WTC11 (cell line): ENCODE measurements at regions of chr2 and their contacts with region 1.

Region 1: DNA sequence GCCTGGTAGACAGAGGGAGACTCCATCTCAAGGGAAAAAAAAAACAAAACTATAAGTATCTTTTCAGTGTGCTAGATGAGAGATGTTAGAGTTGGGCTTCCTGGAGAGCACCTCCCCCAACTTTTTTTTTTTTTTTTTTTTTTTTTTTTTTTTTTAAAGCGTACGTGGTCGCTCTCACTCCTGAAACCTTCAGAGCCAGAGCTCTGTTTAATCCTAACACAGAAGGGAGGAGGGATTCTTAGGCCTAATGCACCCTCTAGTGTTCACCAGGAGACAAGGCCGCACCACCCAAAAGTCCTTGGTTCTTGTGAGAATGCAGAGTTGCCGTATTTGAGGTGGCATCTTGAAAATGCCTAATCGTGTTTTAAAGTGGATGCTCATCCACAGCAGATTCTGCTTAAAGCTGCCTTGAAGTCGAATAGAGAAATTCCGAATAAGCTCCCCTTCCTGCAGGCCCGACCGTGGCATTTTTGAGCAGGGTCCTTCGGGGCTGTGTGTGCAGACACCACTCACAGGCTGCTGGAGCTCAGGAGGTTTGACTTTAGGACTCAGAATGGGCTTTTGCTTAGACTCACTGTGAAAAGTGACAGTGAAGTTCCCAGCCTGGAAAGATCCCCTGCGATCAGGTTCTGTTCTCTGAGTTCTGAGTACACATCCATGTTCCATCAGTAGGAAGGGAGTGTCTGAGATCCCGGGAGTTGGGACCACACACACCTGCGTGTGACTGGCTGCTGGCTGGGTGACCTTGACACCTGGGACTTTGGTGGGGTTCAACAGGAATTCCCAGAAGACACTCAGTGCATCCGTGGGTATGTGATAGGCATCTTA is 252.6 kb downstream of the AGAP1 start:
- DNase-seq: peak; percentile 72
- ATAC-seq: peak; percentile 89
- H3K4me3 Mint-ChIP-seq: no peak overlapping the region
- H3K27ac Mint-ChIP-seq: no peak overlapping the region; the same call in 1 of the 2 replicates
- H3K4me1 Mint-ChIP-seq: peaks cover 27% of the 10 kb centered on the region
- H3K27me3 Mint-ChIP-seq: no peaks in the 10 kb centered on the region
- CTCF ChIP-seq: peak; percentile 67

Region 2: DNA sequence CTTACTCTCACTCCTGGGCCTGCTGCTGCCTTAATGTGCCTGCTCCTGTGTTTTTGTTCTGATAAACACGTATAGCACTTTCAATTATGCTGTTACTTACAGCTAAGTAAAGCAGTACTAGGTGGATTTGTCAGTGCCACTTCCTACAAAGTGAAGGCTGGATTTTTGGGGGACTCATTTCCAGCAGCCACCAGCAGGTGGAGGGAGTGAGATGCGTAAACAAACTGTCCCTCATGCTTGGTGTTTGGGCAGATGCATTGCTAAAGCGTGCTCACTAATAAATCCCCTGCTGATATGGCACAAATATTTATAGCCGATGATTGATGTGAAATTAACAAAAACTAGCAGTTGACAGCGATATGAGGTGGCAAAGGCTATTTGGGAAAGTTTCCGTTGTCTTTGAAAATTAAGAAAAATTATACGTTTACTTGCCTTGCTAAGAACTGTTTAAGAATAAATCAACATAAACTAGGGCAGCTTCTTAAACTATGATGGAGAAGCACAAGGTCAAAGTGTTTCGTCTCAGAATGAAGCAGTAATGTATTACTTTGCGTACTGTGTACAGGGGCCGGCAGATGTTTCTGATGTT is 151.0 kb before region 1 on chr2:
- CTCF ChIA-PET with region 1: interaction called, 129 read pairs
- POLR2A ChIA-PET with region 1: no interaction called
- DNase-seq: peak; percentile 79
- ATAC-seq: peak; percentile 53; the same call in 1 of the 2 replicates
- H3K4me3 Mint-ChIP-seq: no peak overlapping the region
- H3K27ac Mint-ChIP-seq: no peak overlapping the region
- H3K4me1 Mint-ChIP-seq: peaks cover 52% of the 10 kb centered on the region
- H3K27me3 Mint-ChIP-seq: no peaks in the 10 kb centered on the region
- CTCF ChIP-seq: peak; percentile 66

Region 3: DNA sequence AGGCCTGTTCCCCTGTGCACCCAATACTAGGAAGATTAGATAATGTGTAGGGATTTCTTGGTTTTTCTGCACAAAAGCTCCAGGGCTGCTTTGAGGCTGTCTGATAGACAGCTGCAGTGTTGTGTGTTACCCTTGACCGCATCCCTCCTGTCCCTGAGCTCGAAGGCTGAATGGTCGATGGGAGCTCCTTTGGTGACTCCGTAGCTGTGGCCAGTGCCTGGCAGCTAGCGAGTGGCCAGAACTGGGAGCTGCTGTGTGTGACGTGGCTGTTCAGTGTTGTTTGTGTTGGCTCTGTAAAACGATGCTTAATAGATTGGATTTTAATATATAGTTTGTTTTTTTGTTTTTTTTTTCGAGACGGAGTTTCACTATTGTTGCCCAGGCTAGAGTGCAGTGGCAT is 82.6 kb before region 1 on chr2:
- CTCF ChIA-PET with region 1: interaction called, 13 read pairs
- POLR2A ChIA-PET with region 1: no interaction called
- DNase-seq: no peak
- ATAC-seq: no peak
- H3K4me3 Mint-ChIP-seq: no peak overlapping the region
- H3K27ac Mint-ChIP-seq: 0 out of 2 replicates have a peak overlapping the region, but pooled peaks have one; percentile 17
- H3K4me1 Mint-ChIP-seq: peaks cover 84% of the 10 kb centered on the region
- H3K27me3 Mint-ChIP-seq: no peaks in the 10 kb centered on the region; the same call in 1 of the 2 replicates
- CTCF ChIP-seq: no peak

Region 4: GRCh38 chr2:235675678-235676535 is 70.6 kb before region 1 on chr2:
- CTCF ChIA-PET with region 1: interaction called, 21 read pairs
- POLR2A ChIA-PET with region 1: no interaction called
- DNase-seq: no peak
- ATAC-seq: no peak
- H3K4me3 Mint-ChIP-seq: no peak overlapping the region
- H3K27ac Mint-ChIP-seq: 0 out of 2 replicates have a peak overlapping the region, but pooled peaks have one; percentile 54
- H3K4me1 Mint-ChIP-seq: peaks cover 80% of the 10 kb centered on the region
- H3K27me3 Mint-ChIP-seq: peaks cover 14% of the 10 kb centered on the region
- CTCF ChIP-seq: no peak

Region 5: DNA sequence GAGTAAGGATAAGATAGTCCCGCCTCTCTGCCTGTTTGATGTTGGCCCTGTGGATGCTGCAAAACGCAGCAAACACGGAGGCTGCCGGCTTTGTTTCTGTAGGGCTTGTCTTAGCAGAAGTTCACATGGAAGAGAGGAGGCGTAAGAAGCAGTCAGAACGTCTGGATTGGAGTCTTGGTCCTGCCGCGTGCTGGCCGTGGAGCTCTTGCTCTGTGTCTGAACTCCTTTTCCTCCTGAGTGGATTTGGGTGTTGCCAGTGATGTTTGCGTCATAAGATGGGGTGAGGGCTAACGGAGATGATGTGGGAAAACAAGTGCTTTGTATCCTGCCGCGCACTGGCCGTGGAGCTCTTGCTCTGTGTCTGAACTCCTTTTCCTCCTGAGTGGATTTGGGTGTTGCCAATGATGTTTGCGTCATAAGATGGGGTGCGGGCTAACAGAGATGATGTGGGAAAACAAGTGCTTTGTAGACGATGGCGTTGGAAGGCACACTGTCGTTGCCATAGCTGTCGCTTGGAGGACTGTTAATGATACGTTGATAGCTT is 11.7 kb before region 1 on chr2:
- CTCF ChIA-PET with region 1: interaction called, 18 read pairs
- POLR2A ChIA-PET with region 1: no interaction called
- DNase-seq: no peak
- ATAC-seq: no peak
- H3K4me3 Mint-ChIP-seq: no peak overlapping the region
- H3K27ac Mint-ChIP-seq: no peak overlapping the region
- H3K4me1 Mint-ChIP-seq: peaks cover 35% of the 10 kb centered on the region
- H3K27me3 Mint-ChIP-seq: no peaks in the 10 kb centered on the region
- CTCF ChIP-seq: no peak

Region 6: DNA sequence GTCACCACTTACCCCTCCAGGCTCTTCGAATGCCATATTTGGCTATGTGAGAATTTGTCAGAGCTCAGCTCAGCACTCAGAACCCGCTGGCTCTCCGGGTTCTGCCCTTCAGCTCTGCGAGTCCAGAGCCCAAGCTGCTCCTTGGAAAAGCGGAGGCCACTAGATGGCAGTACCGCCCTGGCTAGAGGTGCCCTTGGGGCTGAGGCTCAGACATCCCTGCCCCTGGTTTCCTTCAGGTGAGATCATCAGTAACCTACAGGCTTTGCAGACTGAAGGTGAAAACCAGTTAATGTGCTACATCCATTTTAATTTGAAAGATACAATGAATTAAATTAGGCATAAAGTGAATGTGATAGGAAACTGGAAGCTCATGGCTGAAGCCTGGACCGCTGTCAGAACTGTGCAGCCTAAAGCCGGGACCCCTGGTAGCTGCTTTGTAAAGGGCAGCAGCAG is 33.0 kb after region 1 on chr2:
- CTCF ChIA-PET with region 1: interaction called, 12 read pairs
- POLR2A ChIA-PET with region 1: no interaction called
- DNase-seq: peak; percentile 92
- ATAC-seq: peak; percentile 98
- H3K4me3 Mint-ChIP-seq: no peak overlapping the region
- H3K27ac Mint-ChIP-seq: peak overlapping the region; percentile 24; the same call in 1 of the 2 replicates
- H3K4me1 Mint-ChIP-seq: peaks cover 13% of the 10 kb centered on the region
- H3K27me3 Mint-ChIP-seq: no peaks in the 10 kb centered on the region
- CTCF ChIP-seq: peak; percentile 53; the same call in 1 of the 2 replicates